Endothelial cell of umbilical vein (primary cell): ENCODE measurements at regions of chr15 and their contacts with region 1.

Region 1: GRCh38 chr15:83011271-83012075 is at the start of gene C15orf40:
- DNase-seq: peak; percentile 89
- H3K4me3 ChIP-seq: peak within 1 kb of the TSS; percentile 74 to 100 (median 87)
- H3K27ac ChIP-seq: peak within 1 kb of the TSS; percentile 64
- H3K4me1 ChIP-seq: peaks cover 17% of the 10 kb centered on the region
- H3K27me3 ChIP-seq: no peaks in the 10 kb centered on the region
- CTCF ChIP-seq: peak; percentile 57 to 75
- POLR2A ChIP-seq: peak; percentile 92
- total RNA-seq, gene C15orf40: 20.9 and 27.9 TPM in 2 replicates

Region 2: DNA sequence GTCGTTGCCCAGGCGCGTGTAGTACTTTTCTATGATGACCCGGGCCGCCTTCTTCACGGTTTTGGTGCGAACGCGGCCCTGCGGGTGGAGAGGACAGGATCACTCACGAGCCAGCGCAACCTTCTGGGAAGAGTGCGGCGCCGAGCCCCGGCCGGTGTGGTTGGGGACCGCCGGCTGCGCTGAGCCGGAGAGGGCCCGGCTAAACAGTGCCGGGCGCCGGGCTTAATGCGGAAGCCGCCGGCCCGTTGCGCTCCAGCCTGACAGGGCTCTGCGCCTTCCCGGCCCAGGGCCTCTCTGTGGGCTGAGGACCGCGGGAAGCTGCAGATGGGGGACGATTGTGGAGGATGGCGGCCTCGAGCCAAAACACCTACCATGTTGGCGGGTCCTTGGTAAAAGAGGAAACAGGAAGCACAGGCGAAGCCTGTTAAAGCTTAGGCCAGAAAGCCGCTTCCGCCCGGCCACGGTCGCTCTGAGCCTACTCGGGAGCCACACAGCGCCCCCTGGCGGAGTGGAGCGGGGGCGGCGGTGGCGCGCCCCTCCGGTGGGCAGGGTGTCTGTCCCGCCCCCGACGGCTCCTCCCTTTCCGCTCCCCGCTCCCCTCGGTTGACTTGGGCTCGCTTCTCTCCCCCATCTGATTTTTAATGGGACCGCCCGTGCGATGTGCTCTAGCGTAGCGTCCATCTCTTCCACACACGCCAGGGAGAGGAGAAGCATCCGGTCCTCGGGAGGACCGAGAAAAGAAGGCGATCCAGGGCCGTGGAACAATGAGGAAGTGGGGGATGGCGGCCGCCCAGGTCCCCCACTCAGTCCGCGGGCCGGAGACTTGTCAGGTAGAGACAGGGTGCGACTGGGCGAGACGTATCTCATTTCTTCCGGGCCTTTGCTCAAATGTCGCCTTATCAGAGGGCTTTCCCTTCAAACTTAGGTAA is 471.2 kb before region 1 on chr15 and contains the start of gene RPS17:
- CTCF ChIA-PET with region 1: interaction called, 3 read pairs
- POLR2A ChIA-PET with region 1: no interaction called
- dilution Hi-C with region 1: no loop called
- intact Hi-C with region 1: loop called (anchors 5 kb)
- DNase-seq: peak; percentile 94
- H3K4me3 ChIP-seq: peak within 1 kb of the TSS; percentile 73 to 87 (median 86)
- H3K27ac ChIP-seq: peak within 1 kb of the TSS; percentile 56
- H3K4me1 ChIP-seq: peaks cover 17% of the 10 kb centered on the region
- H3K27me3 ChIP-seq: peaks cover 4 to 11% of the 10 kb centered on the region in 2 experiments
- CTCF ChIP-seq: peak; percentile 100
- POLR2A ChIP-seq: peak; percentile 99
- total RNA-seq, gene RPS17: 1,599 and 1,690 TPM in 2 replicates

Region 3: DNA sequence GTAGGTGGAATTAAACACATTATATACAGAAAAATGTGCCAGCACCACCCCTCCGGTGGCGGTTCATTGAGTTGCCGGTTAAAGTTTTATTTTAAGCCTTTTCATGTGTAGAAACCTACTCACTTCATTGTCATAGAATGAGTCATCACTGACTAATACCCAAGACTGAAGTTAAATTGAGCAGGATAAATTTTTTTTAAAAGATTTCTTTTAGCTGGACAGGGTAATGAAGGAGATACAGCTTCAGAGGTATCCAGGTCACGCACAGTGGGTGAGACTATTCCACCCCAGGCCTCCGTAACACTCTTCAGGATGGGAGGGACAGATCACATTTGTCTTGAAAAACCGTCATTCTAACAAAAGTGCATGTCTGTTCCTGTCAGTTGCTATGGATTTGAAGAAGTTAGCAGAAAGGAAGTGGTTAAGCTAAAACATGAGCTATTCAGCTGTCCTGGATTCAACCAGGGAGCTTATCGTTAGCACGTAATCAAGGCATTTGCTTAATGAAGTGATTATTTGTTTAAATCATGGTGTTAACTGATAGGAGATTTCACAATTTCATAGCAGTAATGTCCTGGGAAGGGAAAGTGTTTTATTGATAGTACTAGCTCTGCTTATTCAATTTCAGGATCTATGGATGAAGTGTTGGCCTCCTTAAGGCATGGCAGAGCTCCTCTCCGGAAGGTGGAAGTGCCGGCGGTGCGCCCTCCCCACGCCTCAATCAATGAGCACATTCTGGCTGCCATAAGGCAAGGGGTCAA is 178.7 kb before region 1 on chr15:
- CTCF ChIA-PET with region 1: no interaction called
- POLR2A ChIA-PET with region 1: no interaction called
- dilution Hi-C with region 1: no loop called
- intact Hi-C with region 1: no loop called
- DNase-seq: peak; percentile 45
- H3K4me3 ChIP-seq: no peak overlapping the region
- H3K27ac ChIP-seq: peak overlapping the region; percentile 24
- H3K4me1 ChIP-seq: peaks cover 16% of the 10 kb centered on the region
- H3K27me3 ChIP-seq: no peaks in the 10 kb centered on the region
- CTCF ChIP-seq: no peak
- POLR2A ChIP-seq: no peak

Region 4: DNA sequence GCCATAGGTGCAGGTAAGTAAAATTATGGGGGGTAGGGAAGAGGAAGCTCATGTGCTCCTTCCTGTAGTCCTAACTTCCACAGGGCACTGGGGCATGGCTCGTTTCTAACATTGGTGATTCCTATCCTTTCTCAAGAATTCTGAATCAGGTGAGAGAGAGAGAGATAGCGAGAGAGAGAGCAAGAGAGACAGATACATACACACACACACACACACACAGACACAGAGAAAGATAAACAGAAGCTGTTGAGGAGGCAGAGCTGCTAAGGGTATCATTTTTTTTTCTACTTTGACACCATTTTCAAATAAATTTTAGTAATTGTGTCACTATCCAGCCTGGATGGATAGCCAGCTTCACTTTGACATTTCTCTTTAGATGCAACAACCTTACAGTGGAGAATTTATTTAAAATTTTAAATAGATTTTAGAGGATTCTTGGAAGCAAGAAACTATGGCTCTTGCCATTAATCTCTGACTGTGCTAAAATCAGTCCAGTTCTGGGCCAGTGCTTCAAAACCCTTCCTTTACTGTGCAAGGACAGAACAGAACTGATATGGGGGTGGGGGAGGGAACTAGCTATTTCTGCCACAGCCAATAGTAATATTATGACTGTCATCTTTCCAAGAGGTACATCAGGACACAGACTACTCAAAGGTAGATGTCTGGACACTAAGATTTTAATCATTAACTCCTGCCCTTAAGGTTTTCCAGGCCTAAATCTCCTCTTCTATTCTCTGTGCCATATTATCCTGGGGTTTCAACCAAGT is 40.1 kb before region 1 on chr15:
- CTCF ChIA-PET with region 1: no interaction called
- POLR2A ChIA-PET with region 1: no interaction called
- dilution Hi-C with region 1: no loop called
- intact Hi-C with region 1: no loop called
- DNase-seq: no peak
- H3K4me3 ChIP-seq: no peak overlapping the region
- H3K27ac ChIP-seq: no peak overlapping the region
- H3K4me1 ChIP-seq: no peaks in the 10 kb centered on the region
- H3K27me3 ChIP-seq: peaks cover 0 to 9% of the 10 kb centered on the region in 2 experiments
- CTCF ChIP-seq: no peak
- POLR2A ChIP-seq: no peak

Region 5: DNA sequence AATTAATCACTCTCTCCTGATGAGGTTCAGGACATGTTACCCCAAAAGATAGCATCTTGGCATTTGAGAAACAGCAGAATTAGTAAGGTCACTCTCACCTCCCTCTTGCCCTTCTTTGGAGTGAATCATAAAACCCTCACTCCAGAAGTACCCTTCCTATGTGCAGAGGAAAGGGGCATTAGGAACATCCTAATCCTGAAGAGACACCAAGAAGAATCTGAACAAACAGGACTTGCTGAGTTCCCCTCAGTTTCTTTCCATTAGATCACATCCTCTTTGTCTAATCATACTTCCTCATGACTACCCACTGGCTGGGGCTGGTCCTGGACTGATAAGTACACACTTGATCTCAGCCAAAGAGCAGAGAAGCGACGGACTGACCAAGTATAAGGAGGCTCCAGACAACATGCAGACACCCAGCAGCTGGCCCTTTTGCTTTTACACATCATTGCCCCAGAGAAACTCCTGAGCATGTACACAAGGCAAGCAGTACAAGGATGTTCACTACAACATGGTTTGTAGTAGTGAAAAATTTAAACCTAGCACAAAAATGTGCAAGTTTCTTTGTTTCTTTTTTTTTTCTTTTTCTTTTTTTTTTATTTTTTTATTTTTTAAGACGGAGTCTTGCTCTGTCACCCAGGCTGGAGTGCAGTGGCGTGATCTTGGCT is 81.0 kb after region 1 on chr15:
- CTCF ChIA-PET with region 1: interaction called, 5 read pairs
- POLR2A ChIA-PET with region 1: no interaction called
- dilution Hi-C with region 1: no loop called
- intact Hi-C with region 1: loop called (anchors 1 kb)
- DNase-seq: peak; percentile 95
- H3K4me3 ChIP-seq: no peak overlapping the region
- H3K27ac ChIP-seq: peak overlapping the region; percentile 93
- H3K4me1 ChIP-seq: peaks cover 12% of the 10 kb centered on the region
- H3K27me3 ChIP-seq: no peaks in the 10 kb centered on the region
- CTCF ChIP-seq: no peak
- POLR2A ChIP-seq: peak; percentile 84

Region 6: DNA sequence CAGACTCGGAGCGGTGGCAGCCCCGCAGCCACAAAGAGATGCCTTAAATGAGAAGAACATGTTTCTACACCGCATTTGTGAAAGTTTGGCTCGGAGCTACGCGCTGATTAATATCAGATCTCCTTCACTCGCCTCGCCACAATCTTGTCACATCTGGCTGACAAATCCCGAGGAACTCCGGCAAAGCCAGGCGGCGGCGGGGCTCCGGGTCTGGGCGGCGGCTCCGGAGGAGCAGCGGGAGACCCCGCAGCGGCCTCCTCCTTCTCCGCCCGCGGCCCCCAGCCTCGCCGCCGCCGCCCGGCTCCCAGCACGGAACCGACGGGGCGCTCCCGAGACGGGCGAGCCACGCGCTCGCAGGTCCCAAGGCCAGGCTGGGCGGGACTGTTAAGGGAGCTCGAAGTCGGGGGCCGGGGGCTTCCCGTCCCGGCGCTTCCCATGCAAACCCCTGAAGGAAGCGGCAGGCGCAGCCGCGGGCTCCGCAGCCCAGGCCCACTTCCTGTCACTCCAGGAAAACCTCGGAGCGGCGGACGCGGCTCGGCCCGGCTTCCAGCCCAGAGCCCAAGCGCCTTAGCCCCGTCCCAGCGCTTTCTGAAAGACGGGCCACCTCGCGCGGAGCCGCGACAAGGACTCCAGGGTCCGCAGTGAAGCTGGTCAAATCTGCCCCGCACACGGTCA is 271.8 kb after region 1 on chr15:
- CTCF ChIA-PET with region 1: no interaction called
- POLR2A ChIA-PET with region 1: no interaction called
- dilution Hi-C with region 1: no loop called
- intact Hi-C with region 1: loop called (anchors 5 kb)
- DNase-seq: peak; percentile 47
- H3K4me3 ChIP-seq: peak overlapping the region; percentile 57 to 81 (median 74)
- H3K27ac ChIP-seq: peak overlapping the region; percentile 25
- H3K4me1 ChIP-seq: peaks cover 31% of the 10 kb centered on the region
- H3K27me3 ChIP-seq: peaks cover 3 to 9% of the 10 kb centered on the region in 2 experiments
- CTCF ChIP-seq: no peak
- POLR2A ChIP-seq: no peak

Region 7: GRCh38 chr15:83559310-83559966 is 548.0 kb after region 1 on chr15:
- CTCF ChIA-PET with region 1: no interaction called
- POLR2A ChIA-PET with region 1: no interaction called
- dilution Hi-C with region 1: no loop called
- intact Hi-C with region 1: loop called (anchors 10 kb)
- DNase-seq: peak; percentile 61
- H3K4me3 ChIP-seq: no peak overlapping the region
- H3K27ac ChIP-seq: no peak overlapping the region
- H3K4me1 ChIP-seq: no peaks in the 10 kb centered on the region
- H3K27me3 ChIP-seq: no peaks in the 10 kb centered on the region
- CTCF ChIP-seq: peak; percentile 70 to 77
- POLR2A ChIP-seq: no peak